ENCODE measurements at regions of chr17 and their contacts with region 1.

Region 1: DNA sequence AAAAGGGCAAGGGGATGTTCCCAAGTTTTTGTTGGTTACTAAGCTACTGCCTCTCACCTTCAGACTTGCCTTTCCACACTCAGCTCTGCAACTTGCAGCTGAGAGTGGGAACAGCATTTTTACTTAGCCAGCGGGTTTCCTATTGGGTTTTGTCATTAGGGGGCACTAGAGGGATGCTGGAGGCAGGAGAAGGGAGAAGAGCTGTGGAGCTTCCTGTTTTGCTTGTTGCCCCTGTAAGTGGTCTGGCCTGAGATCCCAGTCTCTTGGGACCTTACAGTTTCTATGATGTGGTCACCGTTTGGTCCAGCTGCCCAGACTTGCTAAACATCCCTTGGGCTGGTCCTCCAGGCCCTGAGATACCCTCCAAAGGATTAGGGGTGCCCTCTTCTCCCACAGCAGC is 209.6 kb upstream of the NLRP1 start:
- DNase-seq: peak in 1 of 2 experiments; percentile 36
- H3K4me3 ChIP-seq: no peak overlapping the region
- H3K27ac ChIP-seq: no peak overlapping the region
- H3K4me1 ChIP-seq: peaks cover 1 to 18% (median 12%) of the 10 kb centered on the region in 4 experiments; a peak in 6 of 7 replicates
- H3K27me3 ChIP-seq: peaks cover 0 to 3% (median 0%) of the 10 kb centered on the region in 4 experiments; a peak in 2 of 7 replicates
- CTCF ChIP-seq: peak; percentile 49 to 80 (median 77)
- EP300 ChIP-seq: no peak
- POLR2A ChIP-seq: no peak
- RAD21 ChIP-seq: peak; percentile 88 to 96

Region 2: DNA sequence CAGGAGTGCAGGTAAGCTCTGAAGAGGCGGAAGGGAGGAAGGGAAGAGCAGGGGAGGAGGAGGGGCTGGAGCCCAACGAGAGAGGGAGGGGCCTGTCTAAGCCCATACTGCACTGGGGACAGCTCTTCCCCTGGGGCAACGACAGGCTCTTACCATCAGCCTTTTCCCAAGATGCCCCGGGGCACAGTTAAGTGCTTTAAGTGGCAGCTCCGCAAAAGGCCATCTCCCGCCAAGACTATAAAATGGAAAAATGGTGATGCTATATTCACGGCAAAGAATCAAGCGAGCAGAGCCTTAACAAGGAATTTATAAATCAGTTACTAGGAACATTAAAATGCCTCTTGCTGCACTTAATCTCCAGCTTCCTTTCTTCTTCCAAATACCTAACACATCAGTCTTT is 99.3 kb before region 1 on chr17:
- CTCF ChIA-PET with region 1: no interaction called
- POLR2A ChIA-PET with region 1: no interaction called
- DNase-seq: peak in 1 of 2 experiments; percentile 57
- H3K4me3 ChIP-seq: no peak overlapping the region
- H3K27ac ChIP-seq: no peak overlapping the region
- H3K4me1 ChIP-seq: peaks cover 4 to 8% (median 6%) of the 10 kb centered on the region in 4 experiments
- H3K27me3 ChIP-seq: no peaks in the 10 kb centered on the region
- CTCF ChIP-seq: no peak
- EP300 ChIP-seq: no peak
- POLR2A ChIP-seq: no peak
- RAD21 ChIP-seq: no peak

Region 3: DNA sequence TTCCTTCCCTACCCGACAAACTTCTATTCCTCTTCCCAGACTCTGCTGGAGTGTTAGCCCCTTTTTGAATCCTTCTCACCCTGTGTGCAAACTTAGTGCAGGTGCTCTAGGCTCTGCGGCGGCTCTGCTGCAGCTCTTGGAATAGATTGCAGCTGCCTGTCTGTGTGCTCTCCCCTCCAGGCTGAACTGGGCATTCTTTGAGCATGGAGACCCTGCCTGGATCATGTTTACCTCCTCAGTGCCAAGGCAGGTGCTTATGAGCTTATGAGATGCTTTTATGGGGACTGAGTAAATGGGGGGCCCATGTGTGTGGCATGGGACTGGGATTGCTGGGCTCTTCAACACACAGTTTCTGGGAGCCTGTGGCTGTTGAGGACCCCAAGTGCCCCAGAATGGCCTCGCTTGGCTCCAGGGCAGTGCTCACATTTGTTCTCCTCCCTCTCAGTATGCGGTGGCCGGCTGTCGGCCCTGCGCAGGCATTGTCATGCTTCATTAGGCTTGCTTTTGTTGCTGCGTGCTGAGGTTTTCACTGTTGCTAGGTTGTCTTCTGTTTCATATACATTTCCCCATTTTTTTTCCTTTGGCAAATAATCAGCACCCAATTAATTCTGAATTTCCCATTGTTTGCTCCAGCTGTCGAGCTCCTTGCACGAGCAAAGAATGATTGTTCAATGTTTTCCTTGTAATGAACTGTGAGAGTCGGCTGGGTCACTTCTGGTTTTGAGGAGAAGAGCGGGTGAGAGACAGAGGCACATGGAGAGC is 24.1 kb before region 1 on chr17:
- CTCF ChIA-PET with region 1: interaction called, 17 read pairs
- POLR2A ChIA-PET with region 1: no interaction called
- DNase-seq: no peak
- H3K4me3 ChIP-seq: no peak overlapping the region
- H3K27ac ChIP-seq: no peak overlapping the region
- H3K4me1 ChIP-seq: peaks cover 3 to 12% (median 7%) of the 10 kb centered on the region in 4 experiments
- H3K27me3 ChIP-seq: no peaks in the 10 kb centered on the region; a peak in 4 of 7 replicates
- CTCF ChIP-seq: no peak
- EP300 ChIP-seq: no peak
- POLR2A ChIP-seq: no peak
- RAD21 ChIP-seq: no peak

Region 4: GRCh38 chr17:5809580-5810188 is 15.8 kb after region 1 on chr17:
- CTCF ChIA-PET with region 1: interaction called, 18 read pairs
- POLR2A ChIA-PET with region 1: interaction called, 4 read pairs
- DNase-seq: no peak
- H3K4me3 ChIP-seq: no peak overlapping the region
- H3K27ac ChIP-seq: no peak overlapping the region
- H3K4me1 ChIP-seq: peaks cover 0 to 6% (median 2%) of the 10 kb centered on the region in 4 experiments; a peak in 4 of 7 replicates
- H3K27me3 ChIP-seq: no peaks in the 10 kb centered on the region
- CTCF ChIP-seq: no peak
- EP300 ChIP-seq: peak in 1 of 2 experiments; percentile 72; a peak in 1 of 3 replicates
- POLR2A ChIP-seq: no peak
- RAD21 ChIP-seq: no peak

Region 5: GRCh38 chr17:5837055-5837491 is 43.2 kb after region 1 on chr17:
- CTCF ChIA-PET with region 1: interaction called, 16 read pairs
- POLR2A ChIA-PET with region 1: interaction called, 6 read pairs
- DNase-seq: no peak
- H3K4me3 ChIP-seq: no peak overlapping the region
- H3K27ac ChIP-seq: no peak overlapping the region
- H3K4me1 ChIP-seq: peaks cover 0 to 6% (median 0%) of the 10 kb centered on the region in 4 experiments; a peak in 1 of 7 replicates
- H3K27me3 ChIP-seq: no peaks in the 10 kb centered on the region
- CTCF ChIP-seq: no peak
- EP300 ChIP-seq: no peak
- POLR2A ChIP-seq: no peak
- RAD21 ChIP-seq: no peak

Region 6: DNA sequence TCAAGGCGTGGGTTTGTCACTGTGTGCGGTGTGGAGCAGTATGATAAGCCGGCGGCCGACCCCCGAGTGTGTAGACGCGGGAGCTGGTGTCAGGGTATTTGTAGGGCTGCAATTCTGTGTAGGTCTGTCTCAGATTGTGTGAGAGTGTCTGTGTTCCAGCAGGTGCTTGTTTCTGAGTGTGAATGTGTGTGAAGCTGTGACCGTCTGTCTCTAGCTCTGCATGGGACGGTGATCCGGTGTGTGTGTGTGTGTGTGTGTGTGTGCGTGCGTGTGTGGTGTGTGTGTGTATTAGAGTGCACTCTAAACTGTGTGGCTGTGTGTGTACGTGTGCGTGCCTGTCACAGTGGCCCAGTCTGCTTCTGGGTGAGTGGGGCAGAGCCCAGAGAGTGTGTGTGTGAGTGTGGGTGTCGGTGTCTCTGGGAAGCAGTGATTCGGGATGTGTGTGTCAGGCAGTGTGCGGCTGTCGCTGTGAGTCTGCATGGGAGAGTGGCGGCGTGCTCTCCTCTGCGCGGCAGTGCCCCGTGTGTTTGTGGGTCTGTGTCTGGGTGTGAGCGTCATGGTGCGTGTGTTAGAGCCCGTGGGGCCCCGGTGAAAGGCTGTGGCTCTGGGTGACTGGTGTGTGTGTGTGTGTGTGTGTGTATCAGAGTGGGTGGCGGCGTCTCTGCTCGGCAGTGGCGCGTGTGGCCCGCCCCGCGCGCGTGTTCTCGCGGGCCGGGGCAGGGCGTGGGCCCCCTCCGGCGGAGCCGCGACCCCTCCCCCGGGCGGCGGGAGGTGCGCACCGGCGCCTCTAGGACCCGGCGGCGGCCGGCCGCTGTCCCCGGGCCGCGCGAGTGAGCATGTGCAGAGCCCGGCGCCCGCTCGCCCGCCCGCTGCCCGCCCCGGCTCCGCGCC is 275.9 kb after region 1 on chr17 and contains the start of gene WSCD1:
- CTCF ChIA-PET with region 1: interaction called, 15 read pairs
- POLR2A ChIA-PET with region 1: no interaction called
- DNase-seq: peak in 1 of 2 experiments; percentile 55
- H3K4me3 ChIP-seq: peak within 1 kb of the TSS; percentile 52 to 83 (median 78)
- H3K27ac ChIP-seq: no peak within 1 kb of the TSS
- H3K4me1 ChIP-seq: peaks cover 3 to 18% (median 11%) of the 10 kb centered on the region in 4 experiments; a peak in 6 of 7 replicates
- H3K27me3 ChIP-seq: peaks cover 0 to 22% (median 16%) of the 10 kb centered on the region in 4 experiments; a peak in 6 of 7 replicates
- CTCF ChIP-seq: no peak
- EP300 ChIP-seq: no peak
- POLR2A ChIP-seq: no peak
- RAD21 ChIP-seq: no peak
- total RNA-seq, gene WSCD1: 39.0 and 47.4 TPM in 2 replicates

Measured in H1 (cell line).